ENCODE measurements at regions of chr6 and their contacts with region 1.

Region 1: GRCh38 chr6:32413427-32414047 is 6.6 kb upstream of the BTNL2 start:
- DNase-seq: peak; percentile 80 to 92
- H3K4me3 ChIP-seq: no peak overlapping the region
- H3K27ac ChIP-seq: no peak overlapping the region
- H3K4me1 ChIP-seq: peaks cover 0 to 14% (median 3%) of the 10 kb centered on the region in 4 donors
- H3K27me3 ChIP-seq: peaks cover 0 to 67% (median 24%) of the 10 kb centered on the region in 3 donors
- CTCF ChIP-seq: peak in 6 of 7 experiments; percentile 51 to 94 (median 93)
- EP300 ChIP-seq: no peak
- POLR2A ChIP-seq: no peak

Region 2: GRCh38 chr6:32244946-32245398 is 168.6 kb before region 1 on chr6:
- intact Hi-C with region 1: loop called (anchors 10 kb)
- DNase-seq: peak; percentile 71 to 92
- H3K4me3 ChIP-seq: peak overlapping the region in 1 of 4 donors; percentile 19
- H3K27ac ChIP-seq: peak overlapping the region in 4 of 5 donors; percentile 55 to 68 (median 62)
- H3K4me1 ChIP-seq: peaks cover 4 to 10% (median 9%) of the 10 kb centered on the region in 4 donors
- H3K27me3 ChIP-seq: peaks cover 0 to 5% (median 4%) of the 10 kb centered on the region in 3 donors
- CTCF ChIP-seq: peak in 5 of 7 experiments; percentile 83 to 93 (median 91)
- EP300 ChIP-seq: no peak
- POLR2A ChIP-seq: no peak

Region 3: DNA sequence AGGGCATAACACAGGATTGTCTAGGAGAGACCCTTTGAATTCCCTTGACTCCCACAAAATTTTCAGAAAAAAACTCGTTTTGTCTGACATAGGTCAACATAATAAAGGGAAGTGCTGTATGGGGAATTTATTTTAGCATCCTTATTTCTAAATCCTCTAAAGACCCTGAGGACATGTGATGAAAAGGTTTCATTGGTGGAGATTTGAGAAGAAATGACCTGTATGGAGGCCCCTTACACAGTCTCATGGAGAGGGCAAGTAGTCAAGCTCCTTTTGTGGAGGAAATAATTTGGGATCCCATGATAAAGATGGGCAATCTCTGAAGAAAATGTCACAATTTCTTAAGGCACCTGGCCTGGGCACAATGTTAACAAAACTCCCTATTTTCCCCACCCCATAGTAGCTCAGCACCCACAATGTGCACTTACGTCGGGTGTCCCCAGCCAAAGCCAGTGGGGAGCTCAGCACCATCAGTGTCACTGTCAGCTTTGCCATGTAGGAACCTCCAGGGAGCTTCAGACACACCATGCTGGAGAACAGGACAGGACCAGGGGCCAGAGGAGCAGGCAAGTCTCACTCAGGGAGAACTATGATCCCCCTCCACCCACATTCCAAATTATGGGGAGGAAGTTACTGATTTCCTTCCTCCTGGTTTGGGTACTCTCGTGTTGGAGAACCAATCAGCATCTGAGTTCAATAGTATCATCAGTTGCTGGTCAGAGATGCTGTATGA is 116.3 kb after region 1 on chr6 and contains the start of gene HLA-DRB5:
- intact Hi-C with region 1: no loop called
- DNase-seq: peak; percentile 4 to 34
- H3K4me3 ChIP-seq: no peak within 1 kb of the TSS
- H3K27ac ChIP-seq: no peak within 1 kb of the TSS
- H3K4me1 ChIP-seq: no peaks in the 10 kb centered on the region
- H3K27me3 ChIP-seq: no peaks in the 10 kb centered on the region
- CTCF ChIP-seq: no peak
- EP300 ChIP-seq: no peak
- POLR2A ChIP-seq: no peak
- total RNA-seq, gene HLA-DRB5: 0.43 to 39.1 (median 12.5) TPM in 3 of 5 donors, not detected in the others

Region 4: GRCh38 chr6:32697031-32697430 is 283.5 kb after region 1 on chr6:
- intact Hi-C with region 1: loop called (anchors 5 kb)
- DNase-seq: no peak
- H3K4me3 ChIP-seq: no peak overlapping the region
- H3K27ac ChIP-seq: no peak overlapping the region
- H3K4me1 ChIP-seq: no peaks in the 10 kb centered on the region
- H3K27me3 ChIP-seq: peaks cover 0 to 46% (median 6%) of the 10 kb centered on the region in 3 donors
- CTCF ChIP-seq: no peak
- EP300 ChIP-seq: no peak
- POLR2A ChIP-seq: no peak

Region 5: DNA sequence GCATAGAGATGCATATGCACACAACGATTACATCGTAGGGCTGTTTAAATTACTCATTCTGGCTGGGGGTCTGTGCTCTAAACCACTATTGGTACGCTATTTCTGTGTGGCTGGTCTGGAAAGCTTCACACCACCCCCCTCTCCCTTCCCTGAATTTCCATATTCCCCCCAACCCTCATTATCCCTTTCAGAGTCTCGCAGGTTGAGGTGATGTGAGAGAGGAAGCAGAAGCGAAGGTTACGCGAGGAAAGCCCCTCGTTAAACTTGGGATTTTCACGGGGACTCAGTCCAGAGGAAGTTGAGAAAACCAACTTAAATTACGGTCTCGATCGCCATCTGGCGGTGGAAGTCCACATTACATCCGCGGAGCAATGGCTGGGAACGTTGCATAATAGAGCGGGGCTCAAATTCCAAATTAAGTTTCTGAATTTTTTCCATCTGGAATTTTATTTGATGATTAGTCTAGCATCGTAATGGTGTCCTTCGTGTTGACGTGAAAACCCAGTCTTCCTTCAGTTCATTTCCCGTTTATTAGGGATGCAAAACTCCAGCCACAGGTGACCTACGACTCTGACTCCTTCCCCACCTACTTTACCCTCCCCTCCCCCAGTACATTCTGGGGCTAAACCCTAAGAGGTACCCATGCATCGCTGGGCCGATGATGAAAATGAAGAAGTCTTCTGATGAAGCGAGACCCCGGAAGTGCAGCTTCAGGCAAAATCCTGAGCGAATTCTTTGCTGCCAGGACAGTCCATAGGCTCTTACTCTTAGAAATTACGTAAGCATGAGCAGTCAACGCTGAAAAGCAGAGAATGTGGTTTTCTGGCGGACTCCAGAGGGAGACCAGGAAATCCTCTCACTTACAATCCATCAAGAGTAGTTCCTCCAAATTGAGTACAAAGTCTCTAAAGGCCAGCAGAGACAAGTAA is 383.6 kb after region 1 on chr6:
- intact Hi-C with region 1: loop called (anchors 5 kb)
- DNase-seq: peak; percentile 85 to 86
- H3K4me3 ChIP-seq: no peak overlapping the region
- H3K27ac ChIP-seq: no peak overlapping the region
- H3K4me1 ChIP-seq: peaks cover 0 to 12% (median 9%) of the 10 kb centered on the region in 4 donors
- H3K27me3 ChIP-seq: peaks cover 0 to 78% (median 0%) of the 10 kb centered on the region in 3 donors
- CTCF ChIP-seq: peak in 5 of 7 experiments; percentile 86 to 94 (median 90)
- EP300 ChIP-seq: no peak
- POLR2A ChIP-seq: no peak

Measured in stomach (tissue), 19 donors.